GM12878 (cell line): ENCODE measurements at regions of chr1 and their contacts with region 1.

Region 1: GRCh38 chr1:160607011-160607671 is 27.8 kb upstream of the CD84 start:
- DNase-seq: peak; percentile 90
- ATAC-seq: peak; percentile 83
- H3K4me3 ChIP-seq: no peak overlapping the region
- H3K27ac ChIP-seq: peak overlapping the region; percentile 89
- H3K4me1 ChIP-seq: peaks cover 30% of the 10 kb centered on the region
- H3K27me3 ChIP-seq: no peaks in the 10 kb centered on the region
- CTCF ChIP-seq: peak; percentile 68 to 85 (median 84)
- EP300 ChIP-seq: no peak
- POLR2A ChIP-seq: no peak
- RAD21 ChIP-seq: peak; percentile 99

Region 2: GRCh38 chr1:160193091-160193819 is 413.9 kb before region 1 on chr1:
- CTCF ChIA-PET with region 1: interaction called, 6 read pairs
- POLR2A ChIA-PET with region 1: no interaction called
- RAD21 ChIA-PET with region 1: no interaction called
- SMC1A ChIA-PET with region 1: interaction called, 3 read pairs
- in situ Hi-C with region 1: no loop called
- intact Hi-C with region 1: loop called (anchors 5 kb)
- DNase-seq: peak; percentile 48
- ATAC-seq: peak; percentile 86
- H3K4me3 ChIP-seq: no peak overlapping the region
- H3K27ac ChIP-seq: no peak overlapping the region
- H3K4me1 ChIP-seq: peaks cover 21% of the 10 kb centered on the region
- H3K27me3 ChIP-seq: peaks cover 0 to 3% of the 10 kb centered on the region in 2 experiments; a peak in 1 of 4 replicates
- CTCF ChIP-seq: peak; percentile 95 to 99 (median 97); a peak in 5 of 6 replicates
- EP300 ChIP-seq: no peak
- POLR2A ChIP-seq: no peak
- RAD21 ChIP-seq: peak; percentile 100

Region 3: DNA sequence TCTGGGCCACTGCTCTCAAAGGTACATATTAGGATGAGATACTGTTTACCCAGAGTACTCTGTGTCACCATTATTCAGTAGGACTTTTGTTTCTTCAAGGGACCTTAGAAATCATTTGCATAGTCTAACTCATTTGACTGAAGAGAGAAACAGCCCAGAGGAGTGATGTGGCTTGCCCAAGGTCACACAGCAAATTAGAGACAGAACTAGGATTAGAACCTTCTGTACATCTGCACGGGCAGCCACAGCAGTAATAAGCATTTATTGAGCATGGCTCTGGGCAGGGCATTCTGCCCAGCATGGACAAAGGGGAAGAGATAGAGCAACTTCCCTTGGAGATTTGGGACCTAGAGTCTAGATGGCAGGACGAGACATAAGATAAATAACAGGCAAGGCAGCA is 245.9 kb before region 1 on chr1:
- CTCF ChIA-PET with region 1: no interaction called
- POLR2A ChIA-PET with region 1: no interaction called
- RAD21 ChIA-PET with region 1: no interaction called
- SMC1A ChIA-PET with region 1: no interaction called
- in situ Hi-C with region 1: no loop called
- intact Hi-C with region 1: no loop called
- DNase-seq: no peak
- ATAC-seq: no peak
- H3K4me3 ChIP-seq: no peak overlapping the region
- H3K27ac ChIP-seq: no peak overlapping the region
- H3K4me1 ChIP-seq: no peaks in the 10 kb centered on the region
- H3K27me3 ChIP-seq: no peaks in the 10 kb centered on the region
- CTCF ChIP-seq: no peak
- EP300 ChIP-seq: no peak
- POLR2A ChIP-seq: no peak
- RAD21 ChIP-seq: no peak

Region 4: DNA sequence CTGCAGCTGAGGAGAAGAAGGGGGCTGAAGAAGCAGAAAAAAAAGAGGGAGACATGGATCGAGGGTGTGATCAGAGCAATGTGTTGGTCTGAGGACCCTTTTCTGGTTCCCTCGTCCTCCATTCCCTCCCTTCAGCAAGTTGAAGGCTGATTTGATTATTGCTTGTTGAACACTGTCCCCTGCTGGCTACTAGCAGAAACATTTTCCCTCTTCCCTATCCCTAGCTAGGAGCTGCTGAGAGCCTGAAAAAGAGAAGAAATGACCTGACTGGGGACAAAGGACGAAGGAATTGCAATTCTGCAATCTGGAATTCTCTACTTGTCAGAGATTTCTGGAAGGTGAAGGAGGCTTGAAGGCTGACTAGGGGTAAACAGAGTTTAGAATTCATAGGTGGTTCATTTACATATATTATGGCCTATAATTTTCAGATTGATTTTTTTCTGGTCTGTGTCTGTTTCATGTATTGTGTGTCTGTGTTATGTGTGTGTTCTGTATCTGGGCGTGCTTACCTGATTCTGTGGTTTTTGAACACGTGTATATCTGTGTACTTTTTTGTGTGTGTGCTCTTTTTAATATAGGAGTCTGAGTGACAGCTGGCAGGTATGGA is 230.5 kb before region 1 on chr1:
- CTCF ChIA-PET with region 1: interaction called, 8 read pairs
- POLR2A ChIA-PET with region 1: no interaction called
- RAD21 ChIA-PET with region 1: interaction called, 11 read pairs
- SMC1A ChIA-PET with region 1: interaction called, 7 read pairs
- in situ Hi-C with region 1: no loop called
- intact Hi-C with region 1: no loop called
- DNase-seq: peak; percentile 36
- ATAC-seq: peak; percentile 92
- H3K4me3 ChIP-seq: no peak overlapping the region
- H3K27ac ChIP-seq: no peak overlapping the region
- H3K4me1 ChIP-seq: peaks cover 15% of the 10 kb centered on the region
- H3K27me3 ChIP-seq: no peaks in the 10 kb centered on the region
- CTCF ChIP-seq: peak; percentile 96 to 99 (median 99); a peak in 5 of 6 replicates
- EP300 ChIP-seq: no peak
- POLR2A ChIP-seq: no peak
- RAD21 ChIP-seq: peak; percentile 95

Region 5: DNA sequence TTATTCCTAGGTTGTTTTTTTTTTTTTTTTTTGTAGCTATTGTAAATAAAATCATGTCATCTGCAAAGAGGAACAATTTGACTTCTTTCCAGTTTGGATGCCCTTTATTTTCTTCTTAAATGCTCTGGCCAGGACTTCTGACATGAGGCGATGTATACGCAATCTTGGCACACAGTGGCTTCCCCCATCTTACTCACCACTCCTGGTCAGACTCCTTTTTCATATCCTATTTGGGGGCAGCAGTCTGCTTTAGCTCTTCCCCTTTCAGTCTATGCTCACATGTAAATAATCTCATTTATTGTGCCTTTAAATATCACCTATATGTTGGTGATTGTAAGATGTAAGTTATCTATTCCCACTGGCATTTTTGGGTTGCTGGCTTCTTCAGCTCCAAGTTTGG is 140.2 kb before region 1 on chr1:
- CTCF ChIA-PET with region 1: interaction called, 8 read pairs
- POLR2A ChIA-PET with region 1: no interaction called
- RAD21 ChIA-PET with region 1: no interaction called
- SMC1A ChIA-PET with region 1: interaction called, 10 read pairs
- in situ Hi-C with region 1: no loop called
- intact Hi-C with region 1: no loop called
- DNase-seq: no peak
- ATAC-seq: peak; percentile 73
- H3K4me3 ChIP-seq: no peak overlapping the region
- H3K27ac ChIP-seq: no peak overlapping the region; the same call in 1 of the 2 replicates
- H3K4me1 ChIP-seq: peaks cover 41% of the 10 kb centered on the region
- H3K27me3 ChIP-seq: no peaks in the 10 kb centered on the region
- CTCF ChIP-seq: no peak
- EP300 ChIP-seq: no peak
- POLR2A ChIP-seq: no peak
- RAD21 ChIP-seq: no peak

Region 6: GRCh38 chr1:160550572-160551034 is 56.5 kb before region 1 on chr1:
- CTCF ChIA-PET with region 1: interaction called, 355 read pairs
- POLR2A ChIA-PET with region 1: interaction called, 42 read pairs
- RAD21 ChIA-PET with region 1: interaction called, 257 read pairs
- SMC1A ChIA-PET with region 1: interaction called, 395 read pairs
- in situ Hi-C with region 1: loop called (anchors 5 kb)
- intact Hi-C with region 1: loop called (anchors 1 kb)
- DNase-seq: no peak
- ATAC-seq: peak; percentile 14; the same call in 1 of the 3 replicates
- H3K4me3 ChIP-seq: no peak overlapping the region
- H3K27ac ChIP-seq: peak overlapping the region; percentile 98
- H3K4me1 ChIP-seq: peaks cover 58% of the 10 kb centered on the region
- H3K27me3 ChIP-seq: no peaks in the 10 kb centered on the region
- CTCF ChIP-seq: peak; percentile 32 to 58 (median 46); a peak in 5 of 6 replicates
- EP300 ChIP-seq: no peak
- POLR2A ChIP-seq: no peak
- RAD21 ChIP-seq: peak; percentile 79

Region 7: GRCh38 chr1:160575112-160575664 is 32.0 kb before region 1 on chr1:
- CTCF ChIA-PET with region 1: interaction called, 76 read pairs
- POLR2A ChIA-PET with region 1: interaction called, 45 read pairs
- RAD21 ChIA-PET with region 1: interaction called, 123 read pairs
- SMC1A ChIA-PET with region 1: interaction called, 117 read pairs
- in situ Hi-C with region 1: no loop called
- intact Hi-C with region 1: loop called (anchors 2 kb)
- DNase-seq: no peak
- ATAC-seq: peak; percentile 49
- H3K4me3 ChIP-seq: no peak overlapping the region
- H3K27ac ChIP-seq: peak overlapping the region; percentile 97
- H3K4me1 ChIP-seq: peaks cover 27% of the 10 kb centered on the region
- H3K27me3 ChIP-seq: no peaks in the 10 kb centered on the region
- CTCF ChIP-seq: no peak
- EP300 ChIP-seq: no peak
- POLR2A ChIP-seq: no peak
- RAD21 ChIP-seq: no peak

Region 8: DNA sequence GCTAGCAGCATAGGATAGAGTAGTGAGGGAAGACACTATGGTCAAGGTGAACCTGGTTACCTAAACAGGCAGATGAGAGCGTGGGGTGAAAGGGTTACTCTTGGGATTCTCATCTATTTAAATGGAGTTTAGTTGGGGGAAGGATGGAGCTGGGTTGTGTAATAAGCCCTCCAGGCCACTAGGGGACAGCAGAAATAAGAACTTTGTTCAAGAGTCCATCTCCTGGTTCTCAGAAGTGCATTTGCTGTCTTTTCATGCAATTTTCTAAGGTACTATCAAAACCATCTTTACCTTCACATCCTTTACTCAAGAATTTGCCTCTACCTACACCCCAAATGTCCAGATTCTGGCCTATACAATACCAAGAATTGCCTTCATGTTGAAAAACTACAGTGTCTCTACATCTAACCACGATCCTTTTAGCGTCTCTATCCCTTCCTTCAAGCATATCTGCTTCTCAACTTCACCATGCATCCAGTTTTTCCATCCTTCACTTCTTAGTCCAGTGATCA is 11.7 kb after region 1 on chr1:
- CTCF ChIA-PET with region 1: interaction called, 60 read pairs
- POLR2A ChIA-PET with region 1: interaction called, 15 read pairs
- RAD21 ChIA-PET with region 1: interaction called, 13 read pairs
- SMC1A ChIA-PET with region 1: interaction called, 14 read pairs
- in situ Hi-C with region 1: no loop called
- intact Hi-C with region 1: no loop called
- DNase-seq: no peak
- ATAC-seq: peak; percentile 54
- H3K4me3 ChIP-seq: no peak overlapping the region
- H3K27ac ChIP-seq: no peak overlapping the region; the same call in 1 of the 2 replicates
- H3K4me1 ChIP-seq: peaks cover 28% of the 10 kb centered on the region
- H3K27me3 ChIP-seq: no peaks in the 10 kb centered on the region
- CTCF ChIP-seq: peak; percentile 72 to 88 (median 82)
- EP300 ChIP-seq: no peak
- POLR2A ChIP-seq: no peak
- RAD21 ChIP-seq: peak; percentile 75

Region 9: DNA sequence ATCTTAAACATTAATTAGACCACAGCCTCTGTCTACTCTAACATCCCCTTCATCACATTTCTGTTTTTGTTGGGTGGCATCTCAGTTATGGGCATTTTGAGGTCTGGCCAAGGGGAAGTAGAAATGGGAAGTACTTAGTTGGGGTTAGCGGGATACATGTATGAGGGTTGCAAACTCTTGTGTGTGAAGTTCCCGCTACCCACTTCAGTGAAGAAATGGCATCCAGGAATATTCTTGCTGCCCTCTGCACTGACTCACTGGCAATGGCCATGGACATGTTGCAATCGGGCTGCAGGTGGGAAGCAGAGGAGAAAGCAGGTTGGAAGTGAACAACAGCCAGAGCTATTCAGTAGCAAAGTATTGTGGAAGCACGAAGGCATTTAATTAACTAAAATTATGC is 97.1 kb after region 1 on chr1:
- CTCF ChIA-PET with region 1: no interaction called
- POLR2A ChIA-PET with region 1: no interaction called
- RAD21 ChIA-PET with region 1: no interaction called
- SMC1A ChIA-PET with region 1: no interaction called
- in situ Hi-C with region 1: no loop called
- intact Hi-C with region 1: no loop called
- DNase-seq: no peak
- ATAC-seq: peak; percentile 1; the same call in 1 of the 3 replicates
- H3K4me3 ChIP-seq: peak overlapping the region; percentile 59
- H3K27ac ChIP-seq: peak overlapping the region; percentile 3; the same call in 1 of the 2 replicates
- H3K4me1 ChIP-seq: peaks cover 7% of the 10 kb centered on the region; the same call in 1 of the 2 replicates
- H3K27me3 ChIP-seq: no peaks in the 10 kb centered on the region
- CTCF ChIP-seq: no peak
- EP300 ChIP-seq: no peak
- POLR2A ChIP-seq: no peak
- RAD21 ChIP-seq: no peak

Region 10: GRCh38 chr1:160844447-160845232 is 237.5 kb after region 1 on chr1:
- CTCF ChIA-PET with region 1: no interaction called
- POLR2A ChIA-PET with region 1: no interaction called
- RAD21 ChIA-PET with region 1: no interaction called
- SMC1A ChIA-PET with region 1: no interaction called
- in situ Hi-C with region 1: no loop called
- intact Hi-C with region 1: no loop called
- DNase-seq: no peak
- ATAC-seq: no peak; the same call in 2 of the 3 replicates
- H3K4me3 ChIP-seq: no peak overlapping the region
- H3K27ac ChIP-seq: no peak overlapping the region
- H3K4me1 ChIP-seq: no peaks in the 10 kb centered on the region
- H3K27me3 ChIP-seq: no peaks in the 10 kb centered on the region
- CTCF ChIP-seq: no peak
- EP300 ChIP-seq: no peak
- POLR2A ChIP-seq: no peak
- RAD21 ChIP-seq: no peak

Region 11: GRCh38 chr1:161499099-161500039 is 892.2 kb after region 1 on chr1:
- CTCF ChIA-PET with region 1: no interaction called
- POLR2A ChIA-PET with region 1: no interaction called
- RAD21 ChIA-PET with region 1: no interaction called
- SMC1A ChIA-PET with region 1: no interaction called
- in situ Hi-C with region 1: no loop called
- intact Hi-C with region 1: no loop called
- DNase-seq: peak; percentile 20
- ATAC-seq: peak; percentile 44
- H3K4me3 ChIP-seq: no peak overlapping the region
- H3K27ac ChIP-seq: no peak overlapping the region
- H3K4me1 ChIP-seq: no peaks in the 10 kb centered on the region
- H3K27me3 ChIP-seq: no peaks in the 10 kb centered on the region
- CTCF ChIP-seq: no peak
- EP300 ChIP-seq: no peak
- POLR2A ChIP-seq: no peak
- RAD21 ChIP-seq: no peak